ENCODE measurements at regions of chr19 and their contacts with region 1.

Region 1: DNA sequence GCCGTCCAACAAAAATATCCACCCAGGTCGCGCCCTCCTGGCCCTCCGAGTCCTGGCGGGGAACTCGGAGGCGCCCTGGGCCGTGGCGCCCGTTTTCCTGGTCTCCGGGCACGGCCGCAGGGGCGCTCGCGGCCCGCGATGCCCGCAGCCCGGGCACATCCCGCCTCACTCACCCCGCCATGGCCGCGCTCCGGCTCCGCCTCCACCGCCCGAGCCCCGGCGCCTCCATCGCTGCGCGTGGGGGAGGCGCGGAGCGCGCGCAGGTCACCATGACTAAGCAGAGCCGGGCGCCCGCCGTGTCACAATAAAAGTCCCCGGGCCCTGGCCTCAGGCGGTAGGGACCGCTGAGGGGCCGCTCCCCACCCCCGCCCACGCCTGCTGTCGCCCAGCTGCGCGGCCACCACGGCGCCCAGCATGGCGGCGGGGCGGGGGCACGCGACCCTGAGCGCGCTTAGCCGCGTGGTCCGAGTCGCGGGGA is 593 bp downstream of the KEAP1 start:
- DNase-seq: peak; percentile 85
- H3K4me3 ChIP-seq: peak overlapping the region; percentile 33 to 89 (median 75)
- H3K27ac ChIP-seq: peak overlapping the region; percentile 94
- H3K4me1 ChIP-seq: peaks cover 7% of the 10 kb centered on the region
- H3K27me3 ChIP-seq: no peaks in the 10 kb centered on the region
- CTCF ChIP-seq: no peak
- POLR2A ChIP-seq: peak; percentile 91

Region 2: GRCh38 chr19:10517760-10518443 is 15.3 kb after region 1 on chr19:
- CTCF ChIA-PET with region 1: interaction called, 13 read pairs
- POLR2A ChIA-PET with region 1: no interaction called
- dilution Hi-C with region 1: no loop called
- intact Hi-C with region 1: no loop called
- DNase-seq: no peak
- H3K4me3 ChIP-seq: no peak overlapping the region
- H3K27ac ChIP-seq: no peak overlapping the region
- H3K4me1 ChIP-seq: peaks cover 2% of the 10 kb centered on the region
- H3K27me3 ChIP-seq: peaks cover 51 to 65% of the 10 kb centered on the region in 2 experiments
- CTCF ChIP-seq: no peak
- POLR2A ChIP-seq: no peak

Region 3: DNA sequence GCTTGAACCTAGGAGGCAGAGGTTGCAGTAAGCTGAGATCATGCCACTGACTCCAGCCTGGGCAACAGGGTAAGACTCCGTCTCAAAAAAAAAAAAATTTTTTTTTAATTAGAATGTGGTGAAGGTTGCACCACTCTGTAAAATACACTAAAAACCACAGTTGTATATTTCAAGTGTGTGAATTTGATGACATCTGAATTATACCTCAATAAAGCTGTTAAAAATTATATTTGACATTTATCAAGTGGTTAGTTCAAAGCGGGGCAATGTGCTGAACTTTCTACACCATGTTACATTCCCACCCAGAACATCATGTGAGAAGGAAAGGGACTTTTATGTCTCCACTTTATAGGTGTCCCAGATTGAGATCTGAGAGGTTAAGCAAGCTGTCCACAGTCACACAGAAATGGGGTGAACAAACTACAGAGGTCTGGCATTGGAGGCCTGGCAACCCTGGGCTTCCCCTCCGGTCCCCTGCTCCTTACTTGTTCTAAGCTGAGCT is 20.6 kb after region 1 on chr19:
- CTCF ChIA-PET with region 1: interaction called, 13 read pairs
- POLR2A ChIA-PET with region 1: no interaction called
- dilution Hi-C with region 1: no loop called
- intact Hi-C with region 1: no loop called
- DNase-seq: no peak
- H3K4me3 ChIP-seq: no peak overlapping the region
- H3K27ac ChIP-seq: no peak overlapping the region
- H3K4me1 ChIP-seq: no peaks in the 10 kb centered on the region
- H3K27me3 ChIP-seq: peaks cover 16 to 20% of the 10 kb centered on the region in 2 experiments
- CTCF ChIP-seq: no peak
- POLR2A ChIP-seq: no peak

Region 4: DNA sequence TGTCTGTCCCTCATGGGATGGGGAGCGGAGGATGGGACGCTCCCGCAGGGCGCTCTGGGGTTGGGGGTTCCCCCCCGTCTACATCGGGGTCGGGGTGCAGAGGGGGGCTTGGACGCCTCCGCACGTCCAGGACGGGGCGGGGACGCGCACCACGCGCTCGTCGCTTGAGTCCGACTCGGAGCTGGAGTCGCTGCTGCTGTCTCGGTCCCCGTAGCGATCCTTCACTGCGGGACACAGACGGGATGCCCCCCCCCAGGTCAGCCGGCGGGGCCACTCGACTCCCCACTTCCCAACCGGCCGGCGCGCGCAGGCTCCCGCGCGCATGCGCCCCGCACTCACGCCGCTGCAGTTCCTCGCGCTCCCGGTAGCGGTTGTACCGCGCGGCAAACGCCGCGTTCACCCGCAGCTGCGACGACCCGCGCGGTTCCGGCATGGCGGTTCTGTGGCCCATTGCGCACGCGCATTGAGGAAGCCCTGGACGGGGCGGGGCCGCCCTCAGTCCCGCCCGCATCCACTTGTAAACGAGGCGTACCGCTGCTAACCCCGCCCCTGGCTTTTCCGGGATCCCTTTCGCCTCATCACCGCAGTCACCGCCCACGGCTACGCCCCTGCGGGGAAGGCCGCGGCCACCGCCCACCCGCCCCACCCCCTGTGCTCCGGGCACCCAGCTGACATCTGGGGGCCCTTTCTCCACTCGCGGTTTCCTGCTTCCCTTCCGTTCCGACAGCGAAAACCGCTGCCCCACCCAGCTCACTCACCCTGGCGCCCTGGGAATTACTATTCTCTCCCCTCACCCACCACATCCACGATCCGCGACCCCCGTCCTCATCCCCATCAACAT is 63.2 kb after region 1 on chr19 and contains the start of gene KRI1:
- CTCF ChIA-PET with region 1: interaction called, 3 read pairs
- POLR2A ChIA-PET with region 1: no interaction called
- dilution Hi-C with region 1: no loop called
- intact Hi-C with region 1: loop called (anchors 1 kb)
- DNase-seq: peak; percentile 98
- H3K4me3 ChIP-seq: peak within 1 kb of the TSS; percentile 75 to 99 (median 78)
- H3K27ac ChIP-seq: peak within 1 kb of the TSS; percentile 64
- H3K4me1 ChIP-seq: peaks cover 27% of the 10 kb centered on the region
- H3K27me3 ChIP-seq: no peaks in the 10 kb centered on the region
- CTCF ChIP-seq: peak; percentile 10 to 55
- POLR2A ChIP-seq: peak; percentile 92
- total RNA-seq, gene KRI1: 23.1 and 25.7 TPM in 2 replicates

Region 5: DNA sequence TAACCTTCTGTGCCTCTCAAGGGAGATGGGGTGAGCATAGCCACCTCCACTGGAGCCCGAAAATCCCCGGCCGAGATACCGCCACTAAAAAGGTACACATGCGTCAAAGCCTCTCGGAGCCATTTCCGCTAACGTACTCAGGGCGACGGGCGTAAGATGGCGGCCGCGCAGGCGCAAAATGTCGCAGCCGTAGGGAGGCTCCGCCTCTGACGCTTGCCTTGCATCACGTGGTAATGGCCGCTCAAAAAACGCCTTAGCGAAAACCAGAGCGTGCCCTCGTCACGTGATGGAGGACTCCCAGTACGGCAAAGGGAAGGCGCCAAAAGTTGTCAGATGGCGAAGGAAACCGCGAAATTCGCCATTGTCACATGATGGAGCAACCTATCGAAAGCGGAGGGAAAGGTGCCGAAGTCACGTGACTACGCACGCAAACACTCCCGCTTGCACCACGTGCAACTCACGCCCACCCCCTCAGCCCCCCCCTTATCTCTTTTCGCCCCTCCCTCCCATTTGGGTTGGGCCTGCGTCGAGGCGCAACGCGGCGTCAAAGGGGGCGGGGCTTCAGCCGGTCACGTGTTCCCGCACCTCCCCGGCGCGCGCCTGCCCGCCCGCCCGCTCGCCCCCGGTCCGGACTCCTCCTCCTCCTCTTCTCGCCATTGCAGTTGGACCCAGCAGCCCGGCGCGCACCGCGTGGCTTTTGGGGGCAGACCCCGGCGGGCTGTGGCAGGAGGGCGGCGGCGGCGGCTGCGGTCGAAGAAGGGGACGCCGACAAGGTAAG is 151.3 kb after region 1 on chr19 and contains the start of gene ILF3:
- CTCF ChIA-PET with region 1: no interaction called
- POLR2A ChIA-PET with region 1: no interaction called
- dilution Hi-C with region 1: no loop called
- intact Hi-C with region 1: loop called (anchors 5 kb)
- DNase-seq: peak; percentile 100
- H3K4me3 ChIP-seq: peak within 1 kb of the TSS; percentile 94 to 99 (median 94)
- H3K27ac ChIP-seq: peak within 1 kb of the TSS; percentile 78
- H3K4me1 ChIP-seq: peaks cover 10% of the 10 kb centered on the region
- H3K27me3 ChIP-seq: no peaks in the 10 kb centered on the region
- CTCF ChIP-seq: no peak
- POLR2A ChIP-seq: peak; percentile 92
- total RNA-seq, gene ILF3: 425 and 459 TPM in 2 replicates

Region 6: GRCh38 chr19:11090054-11090900 is 587.7 kb after region 1 on chr19:
- CTCF ChIA-PET with region 1: no interaction called
- POLR2A ChIA-PET with region 1: no interaction called
- dilution Hi-C with region 1: no loop called
- intact Hi-C with region 1: loop called (anchors 10 kb)
- DNase-seq: peak; percentile 91
- H3K4me3 ChIP-seq: peak overlapping the region; percentile 58 to 96 (median 68)
- H3K27ac ChIP-seq: peak overlapping the region; percentile 87
- H3K4me1 ChIP-seq: peaks cover 60% of the 10 kb centered on the region
- H3K27me3 ChIP-seq: no peaks in the 10 kb centered on the region
- CTCF ChIP-seq: no peak
- POLR2A ChIP-seq: peak; percentile 68

Measured in endothelial cell of umbilical vein (primary cell).